Left ventricle myocardium superior (tissue), 1 donor: ENCODE measurements at regions of chr9 and their contacts with region 1.

Region 1: GRCh38 chr9:13688994-13689600 is 409.6 kb upstream of the MPDZ start:
- DNase-seq: peak; percentile 30
- ATAC-seq: no peak

Region 2: GRCh38 chr9:13110766-13111417 is 578.2 kb before region 1 on chr9:
- intact Hi-C with region 1: no loop called
- DNase-seq: peak; percentile 60
- ATAC-seq: peak; percentile 74

Region 3: GRCh38 chr9:13446938-13447842 is 241.9 kb before region 1 on chr9:
- intact Hi-C with region 1: loop called (anchors 10 kb)
- DNase-seq: no peak
- ATAC-seq: peak; percentile 29